ENCODE measurements at regions of chr6 and their contacts with region 1.

Region 1: GRCh38 chr6:52577022-52577777 is at the start of gene TRAM2:
- DNase-seq: peak; percentile 72 to 90
- H3K4me3 ChIP-seq: peak within 1 kb of the TSS; percentile 70 to 94
- H3K27ac ChIP-seq: peak within 1 kb of the TSS; percentile 98 to 99
- H3K4me1 ChIP-seq: peaks cover 0 to 45% (median 34%) of the 10 kb centered on the region in 4 donors
- H3K27me3 ChIP-seq: no peaks in the 10 kb centered on the region
- CTCF ChIP-seq: peak; percentile 20 to 24

Region 2: DNA sequence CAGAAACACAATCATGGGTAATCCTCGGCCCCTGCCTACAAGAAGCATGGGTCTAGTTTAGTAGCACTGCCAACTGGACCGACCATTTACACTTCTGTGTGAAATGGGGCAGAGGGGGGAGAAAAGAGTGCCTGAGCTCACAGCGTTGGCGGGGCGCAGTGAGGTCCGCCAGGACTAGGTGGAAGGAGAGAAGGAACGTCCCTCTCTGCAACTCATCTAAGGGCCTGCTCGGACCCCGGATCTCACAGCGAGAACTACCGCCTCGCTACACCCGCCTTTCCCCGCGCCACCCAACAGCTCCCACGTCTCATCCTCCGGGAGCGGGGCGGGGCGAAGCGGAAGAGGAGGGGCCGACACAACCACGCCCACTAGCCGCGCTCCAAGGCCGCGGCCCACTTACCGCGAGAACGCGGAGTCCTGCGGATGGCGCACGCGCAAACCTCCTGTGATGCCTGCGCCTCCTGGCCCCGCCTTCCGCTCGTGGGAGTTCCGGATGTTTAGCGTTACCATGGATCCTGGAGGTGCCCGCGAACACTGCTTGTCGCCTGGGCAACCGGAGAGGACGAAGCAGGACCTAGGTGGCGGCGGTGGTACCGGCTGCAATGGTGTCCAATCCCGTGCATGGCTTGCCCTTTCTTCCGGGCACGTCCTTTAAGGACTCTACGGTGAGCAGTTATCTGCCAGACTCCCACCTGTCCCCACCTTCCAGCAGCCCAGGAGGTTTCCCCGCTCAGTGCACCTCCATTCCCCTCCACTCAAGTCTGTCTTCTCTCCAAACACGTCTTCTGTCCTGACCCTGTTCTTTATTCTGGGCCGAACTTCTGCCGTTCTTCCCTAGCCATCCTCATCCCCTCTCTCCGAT is 157.2 kb before region 1 on chr6 and contains the start of gene EFHC1:
- intact Hi-C with region 1: loop called (anchors 5 kb)
- DNase-seq: peak; percentile 98 to 99
- H3K4me3 ChIP-seq: peak within 1 kb of the TSS; percentile 65 to 84
- H3K27ac ChIP-seq: peak within 1 kb of the TSS; percentile 84
- H3K4me1 ChIP-seq: peaks cover 0 to 33% (median 18%) of the 10 kb centered on the region in 4 donors
- H3K27me3 ChIP-seq: no peaks in the 10 kb centered on the region
- CTCF ChIP-seq: peak in 1 of 2 experiments; percentile 4

Region 3: GRCh38 chr6:52503848-52504781 is 73.1 kb before region 1 on chr6:
- intact Hi-C with region 1: loop called (anchors 5 kb)
- DNase-seq: peak; percentile 92 to 98
- H3K4me3 ChIP-seq: peak overlapping the region in 1 of 2 donors; percentile 4
- H3K27ac ChIP-seq: peak overlapping the region; percentile 68 to 84
- H3K4me1 ChIP-seq: peaks cover 4 to 62% (median 52%) of the 10 kb centered on the region in 4 donors
- H3K27me3 ChIP-seq: no peaks in the 10 kb centered on the region
- CTCF ChIP-seq: peak in 1 of 2 experiments; percentile 8

Region 4: GRCh38 chr6:52598123-52598823 is 21.1 kb after region 1 on chr6:
- intact Hi-C with region 1: loop called (anchors 2 kb)
- DNase-seq: peak; percentile 66 to 76
- H3K4me3 ChIP-seq: peak overlapping the region in 1 of 2 donors; percentile 23
- H3K27ac ChIP-seq: peak overlapping the region; percentile 80 to 85
- H3K4me1 ChIP-seq: peaks cover 0 to 49% (median 37%) of the 10 kb centered on the region in 4 donors
- H3K27me3 ChIP-seq: no peaks in the 10 kb centered on the region
- CTCF ChIP-seq: peak; percentile 73 to 82

Region 5: GRCh38 chr6:52995913-52996645 is 418.9 kb after region 1 on chr6:
- intact Hi-C with region 1: loop called (anchors 10 kb)
- DNase-seq: peak; percentile 41 to 70
- H3K4me3 ChIP-seq: peak overlapping the region; percentile 68 to 69
- H3K27ac ChIP-seq: peak overlapping the region; percentile 92 to 94
- H3K4me1 ChIP-seq: peaks cover 0 to 28% (median 16%) of the 10 kb centered on the region in 4 donors
- H3K27me3 ChIP-seq: no peaks in the 10 kb centered on the region
- CTCF ChIP-seq: no peak

Measured in tibial artery (tissue), 4 donors.